T-cell (primary cell): ENCODE measurements at regions of chr1 and their contacts with region 1.

Region 1: DNA sequence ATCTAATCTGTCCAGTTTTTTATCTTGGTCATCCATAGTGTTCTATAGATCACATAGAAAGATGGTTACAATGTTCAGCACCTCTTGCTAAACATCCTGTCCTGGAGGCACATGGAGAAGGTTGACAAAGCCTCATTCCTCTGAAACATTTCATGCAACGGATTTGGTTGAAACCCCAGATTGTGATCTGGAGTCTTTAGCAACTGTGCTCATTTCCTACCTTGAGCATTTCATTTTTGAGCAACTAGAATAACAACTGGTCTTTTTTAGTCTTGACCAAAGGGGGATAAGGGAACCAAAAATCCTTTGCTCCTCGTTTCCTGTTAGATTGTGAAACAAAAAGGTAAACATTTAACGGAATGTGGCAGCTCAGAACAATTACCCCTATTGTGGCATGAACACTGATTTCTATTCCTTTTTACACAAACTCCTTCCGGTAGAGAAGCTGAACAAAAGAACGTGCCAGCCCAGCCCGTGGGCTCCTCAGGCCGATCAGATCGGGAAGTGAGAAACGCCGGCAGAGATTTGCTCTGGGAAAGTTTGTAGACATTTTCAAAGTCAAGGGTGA is 94.7 kb upstream of the ERRFI1 start:
- DNase-seq: no peak
- ATAC-seq: peak in 1 of 4 experiments; percentile 19
- H3K4me3 ChIP-seq: no peak overlapping the region
- H3K4me3 Mint-ChIP-seq: peak overlapping the region; percentile 45 to 55 (median 52)
- H3K27ac ChIP-seq: no peak overlapping the region
- H3K27ac Mint-ChIP-seq: peak overlapping the region in 1 of 2 donors; percentile 36
- H3K4me1 ChIP-seq: peaks cover 0 to 9% of the 10 kb centered on the region in 2 experiments
- H3K4me1 Mint-ChIP-seq: peaks cover 10 to 23% (median 10%) of the 10 kb centered on the region in 3 donors
- H3K27me3 ChIP-seq: peaks cover 2 to 6% of the 10 kb centered on the region in 2 experiments
- H3K27me3 Mint-ChIP-seq: peaks cover 4 to 5% of the 10 kb centered on the region in 2 donors

Region 2: GRCh38 chr1:7980984-7981383 is 139.8 kb before region 1 on chr1:
- CTCF ChIA-PET with region 1: interaction called in 1 of 2 experiments, 10 read pairs
- POLR2A ChIA-PET with region 1: no interaction called
- DNase-seq: no peak
- ATAC-seq: no peak
- H3K4me3 ChIP-seq: no peak overlapping the region
- H3K4me3 Mint-ChIP-seq: no peak overlapping the region
- H3K27ac ChIP-seq: no peak overlapping the region
- H3K27ac Mint-ChIP-seq: no peak overlapping the region
- H3K4me1 ChIP-seq: peaks cover 2 to 13% of the 10 kb centered on the region in 2 experiments
- H3K4me1 Mint-ChIP-seq: peaks cover 7 to 9% (median 7%) of the 10 kb centered on the region in 3 donors
- H3K27me3 ChIP-seq: no peaks in the 10 kb centered on the region
- H3K27me3 Mint-ChIP-seq: no peaks in the 10 kb centered on the region